ENCODE measurements at regions of chr2 and their contacts with region 1.

Region 1: DNA sequence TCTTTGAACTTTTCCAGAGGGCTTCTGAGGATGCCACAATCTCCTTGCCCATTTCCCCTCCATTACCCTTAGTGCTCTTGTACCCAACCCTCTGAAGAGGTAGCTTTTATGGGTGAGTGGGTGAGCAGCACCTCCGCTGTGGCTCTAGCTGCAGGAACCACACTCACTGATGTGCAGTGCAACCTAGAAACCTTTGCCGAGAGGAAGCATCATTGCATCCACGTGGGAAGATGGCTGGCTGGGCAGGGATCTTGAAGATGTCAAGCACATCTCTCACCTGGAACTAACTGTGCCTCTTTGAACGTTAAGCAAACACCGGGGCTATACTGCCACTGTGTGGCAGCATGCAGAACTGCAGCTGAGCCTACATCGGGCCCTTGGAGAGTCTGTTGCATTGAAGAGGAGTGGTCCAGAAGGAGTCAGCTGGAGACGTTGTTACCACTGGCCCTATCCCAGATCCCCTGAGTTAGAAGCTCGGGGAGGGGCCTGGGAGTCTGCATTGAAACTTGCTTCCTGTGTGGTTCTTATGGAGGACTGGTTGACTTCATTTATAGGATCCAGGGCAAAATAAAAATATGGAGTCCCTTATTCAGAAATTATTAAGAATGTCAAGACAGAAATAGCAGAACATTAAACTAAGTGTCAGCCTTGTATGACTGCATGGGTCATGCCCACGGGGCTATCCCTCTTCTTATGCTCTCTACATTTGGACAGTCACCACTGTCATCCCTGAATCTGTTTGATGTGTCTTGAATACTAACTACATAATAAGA is 28.7 kb downstream of the IGFBP5 start:
- DNase-seq: peak; percentile 82
- H3K4me3 ChIP-seq: no peak overlapping the region
- H3K27ac ChIP-seq: no peak overlapping the region
- H3K4me1 ChIP-seq: peaks cover 18% of the 10 kb centered on the region
- H3K27me3 ChIP-seq: no peaks in the 10 kb centered on the region
- CTCF ChIP-seq: peak; percentile 91 to 98 (median 97)
- POLR2A ChIP-seq: no peak

Region 2: GRCh38 chr2:216519154-216519762 is 147.4 kb before region 1 on chr2:
- intact Hi-C with region 1: loop called (anchors 5 kb)
- DNase-seq: peak; percentile 90
- H3K4me3 ChIP-seq: no peak overlapping the region
- H3K27ac ChIP-seq: no peak overlapping the region
- H3K4me1 ChIP-seq: no peaks in the 10 kb centered on the region
- H3K27me3 ChIP-seq: no peaks in the 10 kb centered on the region
- CTCF ChIP-seq: peak; percentile 78 to 87 (median 86)
- POLR2A ChIP-seq: no peak

Measured in testis (tissue), 5 donors.